Activated B cell treated with CpG ODN at 0.5 μM for 24 hours (primary cell): ENCODE measurements at regions of chr1 and their contacts with region 1.

Region 1: GRCh38 chr1:67685067-67685557 is at the start of gene GADD45A:
- DNase-seq: peak; percentile 81
- ATAC-seq: peak; percentile 87
- H3K4me3 Mint-ChIP-seq: peak within 1 kb of the TSS; percentile 95
- H3K27ac Mint-ChIP-seq: peak within 1 kb of the TSS; percentile 81
- H3K4me1 Mint-ChIP-seq: peaks cover 38% of the 10 kb centered on the region
- H3K27me3 Mint-ChIP-seq: no peaks in the 10 kb centered on the region
- CTCF ChIP-seq: no peak
- total RNA-seq, gene GADD45A: 8.3 and 8.7 TPM in 2 replicates

Region 2: DNA sequence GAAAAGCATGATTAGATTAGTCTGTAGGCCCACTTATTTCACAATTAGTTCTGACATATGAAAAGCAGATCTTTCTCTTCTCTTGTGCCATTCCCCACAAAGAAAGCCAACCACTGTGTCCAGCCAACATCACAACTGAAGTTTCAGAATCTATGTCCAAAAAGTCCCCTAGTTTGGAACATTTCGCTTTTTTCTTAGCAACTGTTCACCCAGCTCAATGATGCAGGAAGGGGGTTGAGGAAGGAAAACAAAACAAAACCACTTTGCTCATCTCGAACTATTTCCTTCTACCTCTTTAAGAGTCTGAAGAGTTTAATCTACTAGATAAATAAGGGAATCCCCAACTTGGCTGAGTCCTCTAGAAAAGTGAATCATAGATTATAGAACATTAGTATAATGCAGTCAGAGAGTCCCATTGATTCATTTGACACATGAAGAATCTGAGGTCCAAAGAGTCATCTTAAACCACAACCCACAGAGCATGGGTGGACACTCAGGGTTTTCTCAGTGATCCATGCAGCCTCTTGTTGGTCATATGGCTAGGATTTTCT is 1310.5 kb before region 1 on chr1:
- CTCF ChIA-PET with region 1: no interaction called
- POLR2A ChIA-PET with region 1: no interaction called
- intact Hi-C with region 1: loop called (anchors 10 kb)
- DNase-seq: no peak
- ATAC-seq: peak; percentile 79
- H3K4me3 Mint-ChIP-seq: peak overlapping the region; percentile 39
- H3K27ac Mint-ChIP-seq: peak overlapping the region; percentile 93
- H3K4me1 Mint-ChIP-seq: peaks cover 94% of the 10 kb centered on the region
- H3K27me3 Mint-ChIP-seq: no peaks in the 10 kb centered on the region
- CTCF ChIP-seq: no peak

Region 3: DNA sequence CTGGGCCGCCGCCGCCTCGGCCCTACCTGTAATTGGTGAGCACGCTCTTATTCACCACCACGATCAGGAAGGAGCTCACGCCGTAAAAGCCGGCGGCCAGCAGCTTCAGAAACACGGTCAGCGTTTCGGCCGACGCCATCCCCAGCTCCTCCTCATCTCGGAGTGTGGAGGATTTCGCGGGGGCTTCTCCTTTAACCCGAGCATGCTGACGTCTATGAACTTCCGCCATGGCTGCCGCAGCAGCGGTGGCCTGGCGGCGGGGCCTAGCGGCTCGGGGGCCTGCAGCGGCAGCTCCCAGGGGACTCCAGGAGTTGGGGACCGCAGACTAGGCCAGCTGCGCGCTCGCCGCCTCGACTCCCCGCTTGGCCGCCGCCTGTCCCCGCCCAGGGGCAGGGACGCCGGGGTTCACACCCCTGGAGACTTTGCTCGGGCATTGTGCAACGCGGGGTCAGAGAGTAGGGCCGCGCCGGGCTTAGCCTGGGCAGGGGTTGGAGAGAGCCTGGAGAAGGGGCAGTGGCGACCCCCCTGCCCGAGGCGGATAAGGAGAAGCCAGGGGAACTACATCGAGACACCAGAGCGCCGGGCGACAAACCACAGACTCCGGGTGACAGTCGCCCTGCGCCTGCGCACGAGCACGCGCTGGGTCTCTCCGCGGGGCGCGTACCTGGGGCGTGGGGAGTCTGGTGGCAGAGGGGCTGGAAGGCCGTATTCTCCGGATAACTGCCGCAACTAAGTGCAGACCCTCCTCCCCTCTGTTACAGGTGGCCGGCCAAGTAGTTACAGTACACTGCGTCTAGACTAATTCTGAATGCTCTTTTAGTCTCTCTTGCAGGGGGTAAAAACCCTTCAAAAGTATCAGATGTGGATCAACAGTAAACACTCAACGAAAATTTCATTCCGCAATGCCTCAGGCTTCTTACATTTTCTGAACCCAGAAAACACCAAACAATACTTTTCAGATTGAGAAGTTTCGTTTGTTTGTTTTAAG is 631.0 kb before region 1 on chr1 and contains the start of gene SLC35D1:
- CTCF ChIA-PET with region 1: no interaction called
- POLR2A ChIA-PET with region 1: interaction called, 5 read pairs
- intact Hi-C with region 1: loop called (anchors 10 kb)
- DNase-seq: peak; percentile 82
- ATAC-seq: peak; percentile 85
- H3K4me3 Mint-ChIP-seq: peak within 1 kb of the TSS; percentile 92
- H3K27ac Mint-ChIP-seq: peak within 1 kb of the TSS; percentile 92
- H3K4me1 Mint-ChIP-seq: peaks cover 21% of the 10 kb centered on the region
- H3K27me3 Mint-ChIP-seq: no peaks in the 10 kb centered on the region
- CTCF ChIP-seq: no peak
- total RNA-seq, gene SLC35D1: 10.1 and 11.1 TPM in 2 replicates

Region 4: GRCh38 chr1:67339623-67340343 is 345.3 kb before region 1 on chr1:
- CTCF ChIA-PET with region 1: no interaction called
- POLR2A ChIA-PET with region 1: interaction called, 7 read pairs
- intact Hi-C with region 1: loop called (anchors 5 kb)
- DNase-seq: no peak
- ATAC-seq: peak; percentile 51
- H3K4me3 Mint-ChIP-seq: peak overlapping the region; percentile 62
- H3K27ac Mint-ChIP-seq: peak overlapping the region; percentile 77
- H3K4me1 Mint-ChIP-seq: peaks cover 74% of the 10 kb centered on the region
- H3K27me3 Mint-ChIP-seq: no peaks in the 10 kb centered on the region
- CTCF ChIP-seq: no peak

Region 5: DNA sequence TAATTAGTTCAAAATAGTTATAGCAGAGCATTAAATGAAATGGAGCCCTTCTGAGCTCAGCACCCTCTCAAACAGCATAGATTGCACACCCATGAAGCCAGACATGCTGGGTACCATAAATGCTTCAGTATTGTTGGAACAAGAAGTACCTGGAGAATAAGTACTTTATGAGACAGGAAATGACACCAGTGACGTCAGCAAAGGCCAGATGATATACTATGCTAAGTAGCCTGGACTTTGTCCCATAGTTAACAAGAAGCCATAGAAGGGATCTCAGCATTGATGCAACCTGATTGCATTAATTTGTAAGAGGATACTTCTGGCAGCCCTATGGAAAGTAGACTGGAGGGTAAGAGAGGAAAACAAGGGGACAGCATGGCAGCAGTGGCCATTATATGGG is 16.5 kb before region 1 on chr1:
- CTCF ChIA-PET with region 1: no interaction called
- POLR2A ChIA-PET with region 1: no interaction called
- intact Hi-C with region 1: no loop called
- DNase-seq: no peak
- ATAC-seq: no peak
- H3K4me3 Mint-ChIP-seq: no peak overlapping the region
- H3K27ac Mint-ChIP-seq: no peak overlapping the region
- H3K4me1 Mint-ChIP-seq: no peaks in the 10 kb centered on the region
- H3K27me3 Mint-ChIP-seq: peaks cover 12% of the 10 kb centered on the region
- CTCF ChIP-seq: no peak

Region 6: DNA sequence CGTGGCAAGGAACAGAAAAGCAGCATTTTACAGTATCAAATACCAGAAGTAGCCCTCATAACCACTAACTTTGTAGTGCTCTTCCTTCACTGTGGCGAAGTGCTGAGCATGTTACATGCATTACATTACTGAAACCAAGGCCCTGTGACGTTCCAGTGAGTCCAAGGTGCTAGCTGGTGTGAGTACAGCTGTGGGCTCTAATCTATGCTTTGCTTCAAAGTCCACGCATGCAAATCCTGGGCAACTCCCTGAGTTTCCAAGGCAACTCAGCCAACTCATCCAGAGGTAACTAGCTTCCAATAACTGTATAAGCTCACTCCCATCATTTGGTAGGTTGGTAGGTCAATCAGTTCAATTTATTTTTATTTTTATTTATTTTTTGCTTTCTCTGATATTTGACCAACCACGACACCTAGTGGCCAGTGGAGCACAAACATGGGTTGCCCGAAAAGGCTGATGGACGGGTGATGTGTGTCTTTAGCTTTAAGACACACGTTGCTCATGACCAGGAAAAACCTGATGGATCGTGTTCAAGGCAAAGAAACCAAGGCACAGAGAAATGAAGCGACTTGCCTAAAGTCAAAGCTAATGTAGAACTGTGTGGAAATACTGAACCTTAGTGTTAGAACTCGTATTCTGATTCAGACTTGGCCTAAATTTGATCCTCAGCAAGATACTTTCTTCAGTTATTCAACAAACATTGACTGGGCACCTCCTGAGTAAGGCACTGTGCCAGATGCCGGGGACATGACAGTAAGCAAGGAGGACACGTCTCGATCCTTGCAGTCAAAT is 75.1 kb after region 1 on chr1:
- CTCF ChIA-PET with region 1: interaction called, 17 read pairs
- POLR2A ChIA-PET with region 1: interaction called, 8 read pairs
- intact Hi-C with region 1: loop called (anchors 1 kb)
- DNase-seq: no peak
- ATAC-seq: peak; percentile 74
- H3K4me3 Mint-ChIP-seq: no peak overlapping the region
- H3K27ac Mint-ChIP-seq: no peak overlapping the region
- H3K4me1 Mint-ChIP-seq: peaks cover 7% of the 10 kb centered on the region
- H3K27me3 Mint-ChIP-seq: peaks cover 27% of the 10 kb centered on the region
- CTCF ChIP-seq: peak; percentile 64